H1 (cell line): ENCODE measurements at regions of chr11 and their contacts with region 1.

Region 1: DNA sequence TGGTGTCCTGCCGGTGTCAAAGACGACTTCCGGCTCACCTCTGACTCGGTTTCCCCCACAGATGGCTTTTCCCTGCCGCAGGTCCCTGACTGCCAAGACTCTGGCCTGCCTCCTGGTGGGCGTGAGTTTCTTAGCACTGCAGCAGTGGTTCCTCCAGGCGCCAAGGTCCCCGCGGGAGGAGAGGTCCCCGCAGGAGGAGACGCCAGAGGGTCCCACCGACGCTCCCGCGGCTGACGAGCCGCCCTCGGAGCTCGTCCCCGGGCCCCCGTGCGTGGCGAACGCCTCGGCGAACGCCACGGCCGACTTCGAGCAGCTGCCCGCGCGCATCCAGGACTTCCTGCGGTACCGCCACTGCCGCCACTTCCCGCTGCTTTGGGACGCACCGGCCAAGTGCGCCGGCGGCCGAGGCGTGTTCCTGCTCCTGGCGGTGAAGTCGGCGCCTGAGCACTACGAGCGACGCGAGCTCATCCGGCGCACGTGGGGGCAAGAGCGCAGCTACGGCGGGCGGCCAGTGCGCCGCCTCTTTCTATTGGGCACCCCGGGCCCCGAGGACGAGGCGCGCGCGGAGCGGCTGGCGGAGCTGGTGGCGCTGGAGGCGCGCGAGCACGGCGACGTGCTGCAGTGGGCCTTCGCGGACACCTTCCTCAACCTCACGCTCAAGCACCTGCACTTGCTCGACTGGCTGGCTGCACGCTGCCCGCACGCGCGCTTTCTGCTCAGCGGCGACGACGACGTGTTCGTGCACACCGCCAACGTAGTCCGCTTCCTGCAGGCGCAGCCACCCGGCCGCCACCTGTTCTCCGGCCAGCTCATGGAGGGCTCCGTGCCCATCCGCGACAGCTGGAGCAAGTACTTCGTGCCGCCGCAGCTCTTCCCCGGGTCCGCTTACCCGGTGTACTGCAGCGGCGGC is 5.5 kb downstream of the B3GNT6 start:
- DNase-seq: peak in 1 of 2 experiments; percentile 86
- H3K4me3 ChIP-seq: peak overlapping the region; percentile 9 to 51 (median 17); a peak in 5 of 8 replicates
- H3K27ac ChIP-seq: no peak overlapping the region
- H3K4me1 ChIP-seq: peaks cover 0 to 9% (median 4%) of the 10 kb centered on the region in 4 experiments; a peak in 5 of 7 replicates
- H3K27me3 ChIP-seq: peaks cover 14 to 34% (median 30%) of the 10 kb centered on the region in 4 experiments
- CTCF ChIP-seq: peak; percentile 71 to 79 (median 72)
- EP300 ChIP-seq: no peak
- POLR2A ChIP-seq: no peak
- RAD21 ChIP-seq: peak; percentile 54 to 70; a peak in 3 of 4 replicates

Region 2: DNA sequence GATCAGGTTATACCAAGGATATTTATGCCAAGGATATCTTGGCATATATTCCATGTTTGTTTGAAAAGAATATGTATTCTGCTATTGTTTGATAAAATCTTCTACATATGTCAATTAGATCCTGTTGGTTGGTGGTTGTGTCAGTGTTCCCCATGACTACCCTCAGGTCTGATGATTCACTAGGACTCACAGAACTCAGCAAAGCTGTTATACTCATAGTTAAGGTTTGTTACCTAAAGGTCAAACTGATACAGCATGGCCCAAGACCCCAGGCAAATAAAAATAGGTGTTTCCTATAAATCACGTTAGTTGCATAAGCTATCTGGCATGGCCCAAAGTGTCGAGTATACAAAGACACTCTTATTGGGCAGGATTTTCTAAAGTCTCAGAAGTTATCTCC is 35.8 kb before region 1 on chr11:
- CTCF ChIA-PET with region 1: no interaction called
- POLR2A ChIA-PET with region 1: no interaction called
- DNase-seq: no peak
- H3K4me3 ChIP-seq: no peak overlapping the region
- H3K27ac ChIP-seq: no peak overlapping the region
- H3K4me1 ChIP-seq: no peaks in the 10 kb centered on the region
- H3K27me3 ChIP-seq: no peaks in the 10 kb centered on the region
- CTCF ChIP-seq: no peak
- EP300 ChIP-seq: no peak
- POLR2A ChIP-seq: no peak
- RAD21 ChIP-seq: no peak

Region 3: DNA sequence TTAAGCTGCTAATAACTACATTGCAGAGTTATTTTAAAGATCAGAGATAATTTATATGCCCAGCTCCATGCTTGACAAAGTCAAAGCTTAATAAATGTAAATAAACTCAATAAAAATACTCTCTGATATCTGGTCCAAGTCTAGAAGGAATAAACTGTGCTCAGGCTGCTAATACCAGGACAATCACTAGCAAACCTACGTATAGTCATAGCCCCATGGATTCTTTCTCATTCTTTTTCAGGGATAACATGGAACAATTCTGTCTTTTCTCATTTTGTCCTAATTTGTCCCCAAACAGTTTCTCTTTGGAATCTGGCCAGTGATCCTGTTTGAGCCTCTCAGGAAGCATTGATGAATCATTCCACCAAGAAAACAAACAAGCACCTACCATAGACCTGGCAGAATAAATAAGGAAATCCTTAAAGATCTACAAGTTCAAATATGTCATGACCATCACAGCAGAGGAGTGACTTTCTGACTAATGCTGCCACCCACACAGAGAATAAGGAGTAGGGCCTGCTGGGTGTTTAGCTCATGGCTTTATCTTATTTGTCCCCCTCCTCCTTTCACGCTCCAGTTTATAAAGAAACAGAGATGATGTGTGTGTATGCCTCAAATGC is 19.7 kb before region 1 on chr11:
- CTCF ChIA-PET with region 1: interaction called, 27 read pairs
- POLR2A ChIA-PET with region 1: no interaction called
- DNase-seq: no peak
- H3K4me3 ChIP-seq: no peak overlapping the region
- H3K27ac ChIP-seq: no peak overlapping the region
- H3K4me1 ChIP-seq: peaks cover 0 to 4% (median 1%) of the 10 kb centered on the region in 4 experiments; a peak in 2 of 7 replicates
- H3K27me3 ChIP-seq: no peaks in the 10 kb centered on the region
- CTCF ChIP-seq: no peak
- EP300 ChIP-seq: no peak
- POLR2A ChIP-seq: no peak
- RAD21 ChIP-seq: no peak

Region 4: GRCh38 chr11:77027270-77027669 is 12.5 kb before region 1 on chr11:
- CTCF ChIA-PET with region 1: interaction called, 27 read pairs
- POLR2A ChIA-PET with region 1: no interaction called
- DNase-seq: no peak
- H3K4me3 ChIP-seq: no peak overlapping the region
- H3K27ac ChIP-seq: no peak overlapping the region
- H3K4me1 ChIP-seq: no peaks in the 10 kb centered on the region; a peak in 3 of 7 replicates
- H3K27me3 ChIP-seq: 0 out of 7 replicates have a peak, but pooled peaks cover 0 to 2% (median 0%) of the 10 kb centered on the region in 4 experiments
- CTCF ChIP-seq: no peak
- EP300 ChIP-seq: no peak
- POLR2A ChIP-seq: no peak
- RAD21 ChIP-seq: no peak

Region 5: DNA sequence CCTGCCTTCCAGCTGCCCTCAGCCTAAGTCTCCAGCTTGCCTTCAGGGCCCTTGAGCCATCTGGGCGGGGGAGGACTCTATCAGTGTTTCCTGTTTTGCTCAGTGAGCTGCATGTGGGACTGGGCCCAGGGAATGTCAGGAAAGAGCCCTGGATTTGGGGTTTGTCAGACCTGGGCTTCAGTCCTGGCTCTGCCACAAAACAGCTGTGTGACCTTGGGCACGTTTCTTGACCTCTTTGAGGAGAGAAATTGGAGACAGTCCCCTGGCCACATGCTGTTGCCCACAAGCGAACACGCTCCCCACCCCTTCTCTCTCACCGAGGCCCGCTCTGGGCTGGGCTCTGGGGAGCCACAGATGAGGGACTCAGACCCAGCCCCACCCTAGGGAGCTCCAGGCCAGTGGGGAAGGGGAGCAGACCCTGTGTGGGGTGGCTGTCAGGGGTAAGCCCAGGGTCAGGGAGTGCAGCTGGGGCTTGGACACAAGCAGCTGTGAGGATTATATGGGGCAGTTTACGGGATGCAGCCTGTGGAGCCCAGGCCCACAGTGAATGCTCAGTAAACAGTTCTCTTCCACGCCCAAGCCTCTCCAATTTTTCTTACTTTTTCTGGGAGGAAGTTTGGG is 100.6 kb after region 1 on chr11:
- CTCF ChIA-PET with region 1: no interaction called
- POLR2A ChIA-PET with region 1: no interaction called
- DNase-seq: peak; percentile 9 to 54
- H3K4me3 ChIP-seq: no peak overlapping the region
- H3K27ac ChIP-seq: no peak overlapping the region
- H3K4me1 ChIP-seq: peaks cover 0 to 9% (median 3%) of the 10 kb centered on the region in 4 experiments; a peak in 4 of 7 replicates
- H3K27me3 ChIP-seq: no peaks in the 10 kb centered on the region
- CTCF ChIP-seq: no peak
- EP300 ChIP-seq: no peak
- POLR2A ChIP-seq: no peak
- RAD21 ChIP-seq: no peak